Naive thymus-derived CD4-positive, alpha-beta T cell (primary cell): ENCODE measurements at regions of chr5 and their contacts with region 1.

Region 1: DNA sequence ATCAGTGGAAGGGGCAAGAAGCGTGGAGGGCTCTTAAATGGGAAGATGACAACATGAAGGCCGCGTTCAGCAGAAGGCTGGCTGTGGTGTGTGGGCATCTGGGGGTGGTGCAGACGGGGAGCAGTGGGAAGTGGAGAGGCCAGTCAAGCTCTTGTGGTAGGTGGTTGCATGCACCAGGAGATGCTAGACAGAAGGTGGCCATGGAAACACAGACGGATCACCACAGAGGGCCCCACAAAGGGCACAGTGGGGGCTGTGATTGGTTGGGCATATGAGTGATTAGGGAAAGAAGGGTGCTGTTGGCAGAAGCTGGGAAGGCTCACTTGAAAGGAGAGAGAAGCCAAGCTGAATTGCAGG is 14.7 kb downstream of the MTMR12 start:
- DNase-seq: no peak
- ATAC-seq: peak; percentile 49
- H3K4me3 ChIP-seq: no peak overlapping the region
- H3K4me3 Mint-ChIP-seq: peak overlapping the region in 2 of 10 donors; percentile 7 to 20
- H3K27ac ChIP-seq: no peak overlapping the region
- H3K27ac Mint-ChIP-seq: peak overlapping the region in 5 of 9 donors; percentile 19 to 76 (median 34)
- H3K4me1 ChIP-seq: no peaks in the 10 kb centered on the region
- H3K4me1 Mint-ChIP-seq: peaks cover 34 to 70% (median 61%) of the 10 kb centered on the region in 7 donors
- H3K27me3 ChIP-seq: no peaks in the 10 kb centered on the region
- H3K27me3 Mint-ChIP-seq: no peaks in the 10 kb centered on the region

Region 2: DNA sequence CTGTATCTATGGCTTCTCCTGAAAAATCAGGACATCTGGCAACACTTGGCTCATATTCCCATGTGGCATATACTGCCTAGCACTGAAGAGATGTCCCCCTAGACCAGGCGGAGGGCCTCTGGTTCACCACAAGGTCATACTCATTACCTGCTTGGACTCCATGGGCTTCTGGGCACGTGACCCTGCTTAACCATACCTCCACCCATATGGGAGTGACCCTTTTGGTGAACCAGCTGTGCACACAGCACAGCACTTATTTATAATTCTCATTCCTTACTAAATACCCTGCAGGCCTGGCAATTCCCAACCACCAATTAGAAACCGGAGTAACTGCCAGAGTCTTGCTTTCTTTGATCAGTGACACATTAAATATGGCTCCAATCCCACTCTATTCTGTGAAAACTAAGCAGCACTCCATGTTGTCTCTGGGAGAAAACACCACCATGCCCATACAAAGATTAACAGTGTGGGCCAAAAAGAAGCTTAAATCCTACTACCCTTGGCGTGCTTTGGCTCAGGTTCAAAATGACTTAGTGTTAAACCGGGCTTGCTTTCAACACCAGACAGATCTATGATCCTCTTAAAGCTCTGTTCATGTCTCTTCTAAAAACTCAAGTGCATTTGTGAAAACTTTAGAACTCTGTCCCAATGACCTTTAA is 43.0 kb before region 1 on chr5:
- CTCF ChIA-PET with region 1: no interaction called
- POLR2A ChIA-PET with region 1: no interaction called
- intact Hi-C with region 1: loop called in 1 of 2 experiments (anchors 5 kb)
- DNase-seq: no peak
- ATAC-seq: no peak
- H3K4me3 ChIP-seq: no peak overlapping the region
- H3K4me3 Mint-ChIP-seq: no peak overlapping the region
- H3K27ac ChIP-seq: no peak overlapping the region
- H3K27ac Mint-ChIP-seq: peak overlapping the region in 1 of 9 donors; percentile 32
- H3K4me1 ChIP-seq: no peaks in the 10 kb centered on the region
- H3K4me1 Mint-ChIP-seq: peaks cover 0 to 1% (median 0%) of the 10 kb centered on the region in 7 donors
- H3K27me3 ChIP-seq: no peaks in the 10 kb centered on the region
- H3K27me3 Mint-ChIP-seq: no peaks in the 10 kb centered on the region